ENCODE measurements at regions of chr7 and their contacts with region 1.

Region 1: GRCh38 chr7:108525985-108526767 is at the start of gene PNPLA8:
- DNase-seq: peak; percentile 99 to 100
- ATAC-seq: peak; percentile 89 to 96 (median 89)
- H3K4me3 ChIP-seq: peak within 1 kb of the TSS; percentile 96
- H3K4me3 Mint-ChIP-seq: peak within 1 kb of the TSS; percentile 96
- H3K27ac ChIP-seq: peak within 1 kb of the TSS; percentile 99
- H3K27ac Mint-ChIP-seq: peak within 1 kb of the TSS; percentile 99
- H3K4me1 ChIP-seq: peaks cover 10% of the 10 kb centered on the region
- H3K4me1 Mint-ChIP-seq: peaks cover 34 to 37% of the 10 kb centered on the region in 2 donors
- H3K27me3 ChIP-seq: no peaks in the 10 kb centered on the region
- H3K27me3 Mint-ChIP-seq: peaks cover 0 to 4% of the 10 kb centered on the region in 2 donors
- CTCF ChIP-seq: no peak
- total RNA-seq, gene PNPLA8: 68.6 to 80.2 (median 68.9) TPM

Region 2: DNA sequence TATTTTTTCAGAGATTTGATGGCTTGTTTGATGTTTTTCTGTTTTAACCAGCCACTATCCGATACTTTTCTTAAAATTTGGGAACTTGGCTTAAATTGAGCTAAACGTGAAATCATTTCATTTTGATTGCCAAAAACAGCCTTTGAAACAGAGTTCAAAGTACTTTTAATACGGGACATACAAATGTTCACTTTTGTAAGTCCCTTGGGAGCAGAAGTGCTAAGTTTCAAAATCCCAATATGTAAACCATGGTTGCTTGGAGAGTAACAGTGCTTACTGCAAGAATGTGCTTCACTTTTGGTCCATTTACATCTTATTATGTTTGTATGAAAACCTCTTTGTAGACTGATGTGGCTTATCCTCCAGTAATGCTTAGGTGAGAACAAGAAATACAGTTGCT is 11.2 kb before region 1 on chr7:
- intact Hi-C with region 1: no loop called
- DNase-seq: no peak
- ATAC-seq: no peak
- H3K4me3 ChIP-seq: no peak overlapping the region
- H3K4me3 Mint-ChIP-seq: no peak overlapping the region
- H3K27ac ChIP-seq: no peak overlapping the region
- H3K27ac Mint-ChIP-seq: no peak overlapping the region
- H3K4me1 ChIP-seq: no peaks in the 10 kb centered on the region
- H3K4me1 Mint-ChIP-seq: peaks cover 15 to 24% of the 10 kb centered on the region in 2 donors
- H3K27me3 ChIP-seq: no peaks in the 10 kb centered on the region
- H3K27me3 Mint-ChIP-seq: no peaks in the 10 kb centered on the region
- CTCF ChIP-seq: no peak

Region 3: GRCh38 chr7:108569381-108570145 is 43.4 kb after region 1 on chr7 and contains the starts of genes DNAJB9 and THAP5:
- intact Hi-C with region 1: loop called (anchors 1 kb)
- DNase-seq: peak; percentile 98 to 100
- ATAC-seq: peak; percentile 87 to 96 (median 88)
- H3K4me3 ChIP-seq: peak within 1 kb of the TSS; percentile 87
- H3K4me3 Mint-ChIP-seq: peak within 1 kb of the TSS; percentile 94
- H3K27ac ChIP-seq: peak within 1 kb of the TSS; percentile 97
- H3K27ac Mint-ChIP-seq: peak within 1 kb of the TSS; percentile 98 to 100
- H3K4me1 ChIP-seq: peaks cover 17% of the 10 kb centered on the region
- H3K4me1 Mint-ChIP-seq: peaks cover 47 to 56% of the 10 kb centered on the region in 2 donors
- H3K27me3 ChIP-seq: no peaks in the 10 kb centered on the region
- H3K27me3 Mint-ChIP-seq: no peaks in the 10 kb centered on the region
- CTCF ChIP-seq: no peak
- total RNA-seq, gene DNAJB9: 33.9 to 44.5 (median 43.1) TPM
- total RNA-seq, gene THAP5: 13.8 to 21.0 (median 19.1) TPM

Region 4: DNA sequence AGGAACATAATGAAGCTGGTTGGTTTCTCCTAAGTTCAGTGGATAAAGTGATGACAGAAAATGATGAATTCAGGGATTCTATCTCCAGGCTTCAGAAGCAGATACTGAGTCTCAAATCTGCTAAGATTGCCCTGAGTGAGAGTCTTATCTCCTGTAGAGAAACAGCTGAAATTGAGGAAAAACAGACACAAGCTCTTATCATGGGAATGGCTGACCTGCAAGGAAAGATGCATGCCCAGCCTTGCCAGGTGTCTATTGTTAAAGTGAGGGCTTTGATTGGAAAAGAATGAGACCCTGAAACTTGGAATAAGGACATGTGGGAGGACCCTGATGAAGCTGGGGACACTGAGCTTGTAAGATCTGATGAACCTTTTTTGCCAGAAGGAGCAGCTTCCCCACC is 143.8 kb after region 1 on chr7:
- intact Hi-C with region 1: no loop called
- DNase-seq: no peak
- ATAC-seq: no peak
- H3K4me3 ChIP-seq: no peak overlapping the region
- H3K4me3 Mint-ChIP-seq: no peak overlapping the region
- H3K27ac ChIP-seq: no peak overlapping the region
- H3K27ac Mint-ChIP-seq: no peak overlapping the region
- H3K4me1 ChIP-seq: no peaks in the 10 kb centered on the region
- H3K4me1 Mint-ChIP-seq: no peaks in the 10 kb centered on the region
- H3K27me3 ChIP-seq: no peaks in the 10 kb centered on the region
- H3K27me3 Mint-ChIP-seq: no peaks in the 10 kb centered on the region
- CTCF ChIP-seq: no peak